HEK293T (cell line): ENCODE measurements at regions of chr22 and their contacts with region 1.

Region 1: GRCh38 chr22:39655004-39655579 is 84.5 kb downstream of the CACNA1I start:
- DNase-seq: peak; percentile 46

Region 2: DNA sequence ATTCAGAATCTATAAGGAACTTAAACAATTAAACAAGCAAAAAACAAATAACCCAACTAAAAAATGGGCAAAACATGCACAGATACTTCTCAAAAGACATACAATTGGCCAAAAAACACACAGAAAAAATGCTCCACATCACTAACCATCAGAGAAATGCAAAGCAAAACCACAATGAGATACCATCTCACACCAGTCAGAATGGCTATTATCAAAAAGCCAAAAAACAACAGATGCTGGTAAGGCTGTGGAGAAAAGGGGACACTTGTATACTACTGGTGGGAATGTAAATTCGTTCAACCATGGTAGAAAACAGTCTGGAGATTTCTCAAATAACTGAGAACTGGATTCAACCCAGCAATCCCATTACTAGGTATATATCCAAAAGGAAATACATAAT is 213.6 kb after region 1 on chr22:
- CTCF ChIA-PET with region 1: no interaction called
- POLR2A ChIA-PET with region 1: no interaction called
- DNase-seq: no peak

Region 3: DNA sequence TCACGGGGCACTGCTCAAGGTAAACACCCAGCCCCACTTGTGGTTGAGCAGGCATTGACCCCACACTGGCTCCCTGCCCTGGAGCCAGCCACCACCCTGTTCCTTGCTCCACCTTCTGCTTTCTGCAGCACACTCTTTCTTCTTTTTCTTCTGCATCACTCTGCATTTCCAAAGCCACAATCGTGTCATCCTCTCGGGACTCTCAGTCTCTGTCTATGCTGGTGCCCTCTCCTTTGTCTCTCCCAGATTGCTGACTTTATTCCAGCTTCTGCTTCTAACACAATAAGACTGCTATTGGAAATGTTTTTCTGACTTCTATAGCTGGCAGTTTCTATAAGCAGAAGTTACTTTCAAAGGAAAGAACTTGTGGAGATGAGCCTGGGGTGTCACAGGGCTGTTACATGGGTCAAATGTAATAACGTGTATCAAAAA is 260.2 kb after region 1 on chr22:
- CTCF ChIA-PET with region 1: interaction called, 11 read pairs
- POLR2A ChIA-PET with region 1: no interaction called
- DNase-seq: no peak